Activated CD4-positive, alpha-beta memory T cell treated with anti-CD3 and anti-CD28 coated beads for 36 hours (primary cell): ENCODE measurements at regions of chr13 and their contacts with region 1.

Region 1: GRCh38 chr13:84896128-84896527 is 903.1 kb downstream of the SLITRK6 start:
- DNase-seq: peak; percentile 47
- H3K4me3 Mint-ChIP-seq: no peak overlapping the region
- H3K27ac Mint-ChIP-seq: no peak overlapping the region
- H3K4me1 Mint-ChIP-seq: no peaks in the 10 kb centered on the region
- H3K27me3 Mint-ChIP-seq: no peaks in the 10 kb centered on the region

Region 2: GRCh38 chr13:83666141-83666540 is 1230.0 kb before region 1 on chr13:
- CTCF ChIA-PET with region 1: no interaction called
- POLR2A ChIA-PET with region 1: no interaction called
- intact Hi-C with region 1: no loop called
- DNase-seq: no peak
- H3K4me3 Mint-ChIP-seq: no peak overlapping the region
- H3K27ac Mint-ChIP-seq: no peak overlapping the region
- H3K4me1 Mint-ChIP-seq: no peaks in the 10 kb centered on the region
- H3K27me3 Mint-ChIP-seq: no peaks in the 10 kb centered on the region

Region 3: DNA sequence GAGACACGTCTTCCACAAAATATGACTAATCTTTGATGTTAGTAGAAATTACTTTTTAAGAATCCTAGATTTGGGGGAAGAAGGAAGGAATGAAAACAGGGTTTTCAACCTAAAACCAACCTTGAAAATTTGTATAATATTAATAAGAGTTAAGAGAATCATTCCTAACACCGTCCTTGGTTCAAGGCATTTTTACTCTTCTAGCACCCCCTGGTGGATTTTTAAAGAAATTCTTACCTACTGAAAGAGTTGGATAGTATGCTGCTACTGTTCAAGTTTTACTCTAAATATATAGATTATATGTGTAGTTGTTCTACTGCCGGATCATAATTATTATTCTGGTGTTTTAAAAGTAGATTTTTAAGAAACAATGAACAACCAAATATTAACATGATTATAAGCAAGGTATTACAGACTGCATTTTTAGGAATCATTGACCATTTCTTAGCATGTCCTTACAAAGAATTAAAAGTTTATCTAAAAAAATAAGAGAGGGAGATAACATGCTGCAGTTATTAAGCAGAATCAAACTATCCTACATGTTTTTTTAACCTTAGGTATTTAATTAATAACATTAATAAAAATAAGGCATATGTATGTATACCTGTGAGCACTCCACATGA is 910.5 kb after region 1 on chr13:
- CTCF ChIA-PET with region 1: interaction called, 6 read pairs
- POLR2A ChIA-PET with region 1: no interaction called
- intact Hi-C with region 1: loop called (anchors 1 kb)
- DNase-seq: no peak
- H3K4me3 Mint-ChIP-seq: no peak overlapping the region
- H3K27ac Mint-ChIP-seq: no peak overlapping the region
- H3K4me1 Mint-ChIP-seq: no peaks in the 10 kb centered on the region
- H3K27me3 Mint-ChIP-seq: no peaks in the 10 kb centered on the region

Region 4: GRCh38 chr13:85828149-85828548 is 932.0 kb after region 1 on chr13:
- CTCF ChIA-PET with region 1: interaction called, 4 read pairs
- POLR2A ChIA-PET with region 1: no interaction called
- intact Hi-C with region 1: loop called (anchors 1 kb)
- DNase-seq: no peak
- H3K4me3 Mint-ChIP-seq: no peak overlapping the region
- H3K27ac Mint-ChIP-seq: no peak overlapping the region
- H3K4me1 Mint-ChIP-seq: no peaks in the 10 kb centered on the region
- H3K27me3 Mint-ChIP-seq: no peaks in the 10 kb centered on the region